Activated T-helper 1 cell treated with anti-CD3 and anti-CD28 coated beads, Interleukin-12 subunit alpha, Interleukin-12 subunit beta, Interleukin-2, Interleukin-4 antibody, amounts not matched to agents 30 ng/mL and 10 ng/mL and 1 ng/mL, durations not matched to agents 14 hours and 24 hours and 36 hours (primary cell): ENCODE measurements at regions of chr12 and their contacts with region 1.

Region 1: DNA sequence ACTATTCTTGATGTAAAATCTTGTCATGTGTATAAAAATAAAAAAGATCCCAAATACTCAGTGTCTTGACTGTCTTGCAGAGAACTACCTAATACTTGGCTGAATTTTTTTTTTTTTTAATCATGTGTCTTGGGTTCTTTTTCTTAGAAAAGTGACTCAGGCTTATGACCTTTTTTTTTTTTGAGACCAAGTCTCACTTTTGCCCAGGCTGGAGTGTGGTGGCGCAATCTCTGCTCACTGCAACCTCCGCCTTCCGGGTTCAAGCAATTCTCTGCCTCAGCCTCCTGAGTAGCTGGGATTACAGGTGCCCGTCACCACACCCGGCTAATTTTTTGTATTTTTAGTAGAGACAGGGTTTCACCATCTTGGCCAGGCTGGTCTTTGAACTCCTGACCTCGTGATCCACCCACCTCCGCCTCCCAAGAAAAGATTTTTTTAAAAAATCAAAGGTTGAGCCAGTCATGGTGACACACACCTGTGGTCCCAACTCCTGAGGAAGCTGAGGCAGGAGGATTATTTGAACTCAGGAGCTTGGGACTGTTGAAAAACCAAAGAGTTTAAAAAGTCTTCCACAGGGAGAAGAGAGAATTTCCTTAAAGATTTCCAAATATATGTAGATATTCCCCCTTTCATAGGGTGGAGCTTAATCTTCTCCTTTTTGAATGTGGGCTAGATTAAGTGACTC is 17.7 kb upstream of the TDG start:
- DNase-seq: no peak
- H3K4me3 Mint-ChIP-seq: no peak overlapping the region
- H3K27ac Mint-ChIP-seq: peak overlapping the region; percentile 54
- H3K4me1 Mint-ChIP-seq: peaks cover 47% of the 10 kb centered on the region
- H3K27me3 Mint-ChIP-seq: no peaks in the 10 kb centered on the region

Region 2: DNA sequence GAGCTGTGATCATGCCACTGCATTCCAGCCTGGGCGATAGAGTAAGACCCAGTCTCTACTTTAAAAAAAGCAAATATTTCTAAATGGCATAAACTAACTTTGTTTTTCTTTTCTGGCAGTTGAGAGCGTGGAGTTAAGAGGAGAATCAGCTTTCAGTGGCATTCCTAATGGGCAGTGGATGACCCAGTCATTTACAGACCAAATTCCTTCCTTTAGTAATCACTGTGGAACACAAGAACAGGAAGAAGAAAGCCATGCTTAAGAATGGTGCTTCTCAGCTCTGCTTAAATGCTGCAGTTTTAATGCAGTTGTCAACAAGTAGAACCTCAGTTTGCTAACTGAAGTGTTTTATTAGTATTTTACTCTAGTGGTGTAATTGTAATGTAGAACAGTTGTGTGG is 38.8 kb after region 1 on chr12:
- intact Hi-C with region 1: loop called (anchors 5 kb)
- DNase-seq: no peak
- H3K4me3 Mint-ChIP-seq: no peak overlapping the region
- H3K27ac Mint-ChIP-seq: no peak overlapping the region
- H3K4me1 Mint-ChIP-seq: no peaks in the 10 kb centered on the region
- H3K27me3 Mint-ChIP-seq: no peaks in the 10 kb centered on the region